IMR-90 (cell line): ENCODE measurements at regions of chr6 and their contacts with region 1.

Region 1: GRCh38 chr6:156767603-156768467 is 9.3 kb upstream of the ARID1B start:
- DNase-seq: peak; percentile 68
- ATAC-seq: peak; percentile 72
- H3K4me3 ChIP-seq: no peak overlapping the region
- H3K27ac ChIP-seq: no peak overlapping the region
- H3K4me1 ChIP-seq: peaks cover 7% of the 10 kb centered on the region; the same call in 1 of the 2 replicates
- H3K27me3 ChIP-seq: no peaks in the 10 kb centered on the region; the same call in 1 of the 2 replicates
- CTCF ChIP-seq: no peak
- POLR2A ChIP-seq: no peak
- RAD21 ChIP-seq: no peak

Region 2: DNA sequence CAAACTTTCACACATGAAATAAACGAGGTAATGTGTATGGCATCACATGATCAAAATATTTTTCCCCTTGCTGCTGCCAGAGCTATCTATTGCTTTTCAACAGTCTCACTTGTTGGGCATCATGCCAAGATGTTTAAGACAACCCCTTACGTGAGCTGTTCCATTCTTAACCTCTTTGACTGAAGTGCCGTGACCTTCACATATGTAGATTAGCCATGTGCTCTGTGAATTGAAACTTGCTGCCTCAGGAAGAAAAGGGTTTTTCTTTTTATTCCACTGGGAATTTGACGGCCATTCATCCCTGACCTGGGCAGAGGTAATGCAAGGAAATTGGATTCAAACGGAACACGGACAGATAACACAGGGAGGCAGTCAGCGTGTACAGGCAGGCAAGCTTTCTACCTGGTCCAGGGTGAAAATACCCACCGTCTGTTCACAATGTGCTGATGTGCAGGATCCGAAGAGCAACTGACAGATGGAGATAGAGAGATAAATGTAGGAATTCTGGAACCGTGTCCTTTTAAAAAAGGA is 23.6 kb after region 1 on chr6:
- CTCF ChIA-PET with region 1: no interaction called
- POLR2A ChIA-PET with region 1: interaction called, 15 read pairs
- dilution Hi-C with region 1: no loop called
- in situ Hi-C with region 1: no loop called
- intact Hi-C with region 1: no loop called
- DNase-seq: peak; percentile 52
- ATAC-seq: no peak
- H3K4me3 ChIP-seq: no peak overlapping the region
- H3K27ac ChIP-seq: no peak overlapping the region
- H3K4me1 ChIP-seq: peaks cover 18% of the 10 kb centered on the region
- H3K27me3 ChIP-seq: no peaks in the 10 kb centered on the region
- CTCF ChIP-seq: no peak
- POLR2A ChIP-seq: no peak
- RAD21 ChIP-seq: no peak

Region 3: DNA sequence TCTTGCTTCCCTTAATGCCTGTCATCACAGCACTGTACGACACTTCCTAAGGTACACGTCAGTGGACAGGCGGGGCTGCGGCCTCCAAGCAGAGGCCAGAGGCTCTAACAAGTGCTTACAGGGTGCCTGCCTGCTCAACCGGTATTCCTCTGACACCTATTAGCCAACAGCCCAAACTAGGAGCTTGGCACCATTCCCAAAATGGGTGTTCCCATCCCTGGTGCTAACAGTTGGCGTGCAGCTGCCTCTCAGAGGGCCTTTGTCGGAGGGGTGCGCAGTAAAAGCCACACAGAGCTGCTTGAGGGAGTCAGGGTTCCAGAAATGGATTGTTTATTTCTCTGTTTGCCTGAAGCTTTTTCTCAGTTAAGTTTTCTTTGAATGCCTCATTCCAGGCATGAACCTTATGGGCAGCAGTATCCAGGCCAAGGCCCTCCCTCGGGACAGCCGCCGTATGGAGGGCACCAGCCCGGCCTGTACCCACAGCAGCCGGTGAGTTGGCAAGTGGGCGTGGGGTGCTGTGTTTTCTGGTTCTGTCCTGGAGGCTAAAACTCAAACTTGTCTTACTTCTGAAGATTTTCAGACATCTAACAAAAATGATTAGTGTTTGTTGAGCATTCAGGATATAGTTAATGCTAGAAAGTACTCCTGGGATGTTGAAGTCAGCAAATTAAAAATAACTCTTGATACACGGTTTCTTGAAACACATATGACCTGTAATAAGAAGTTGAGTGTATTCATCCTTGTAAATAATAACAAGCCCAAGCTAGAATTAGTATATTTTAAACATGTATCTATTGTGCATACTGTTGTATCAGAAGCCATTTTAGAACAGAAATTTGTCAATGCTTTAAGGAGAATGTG is 430.8 kb after region 1 on chr6:
- CTCF ChIA-PET with region 1: no interaction called
- POLR2A ChIA-PET with region 1: no interaction called
- dilution Hi-C with region 1: no loop called
- in situ Hi-C with region 1: no loop called
- intact Hi-C with region 1: no loop called
- DNase-seq: peak; percentile 13
- ATAC-seq: peak; percentile 27
- H3K4me3 ChIP-seq: no peak overlapping the region
- H3K27ac ChIP-seq: no peak overlapping the region
- H3K4me1 ChIP-seq: 0 out of 2 replicates have a peak, but pooled peaks cover 1% of the 10 kb centered on the region
- H3K27me3 ChIP-seq: no peaks in the 10 kb centered on the region
- CTCF ChIP-seq: no peak
- POLR2A ChIP-seq: no peak
- RAD21 ChIP-seq: no peak